Astrocyte of the cerebellum (primary cell): ENCODE measurements at regions of chr1 and their contacts with region 1.

Region 1: GRCh38 chr1:157034137-157034800 is 11.3 kb downstream of the ARHGEF11 start:
- DNase-seq: no peak
- H3K4me3 ChIP-seq: no peak overlapping the region
- CTCF ChIP-seq: no peak

Region 2: DNA sequence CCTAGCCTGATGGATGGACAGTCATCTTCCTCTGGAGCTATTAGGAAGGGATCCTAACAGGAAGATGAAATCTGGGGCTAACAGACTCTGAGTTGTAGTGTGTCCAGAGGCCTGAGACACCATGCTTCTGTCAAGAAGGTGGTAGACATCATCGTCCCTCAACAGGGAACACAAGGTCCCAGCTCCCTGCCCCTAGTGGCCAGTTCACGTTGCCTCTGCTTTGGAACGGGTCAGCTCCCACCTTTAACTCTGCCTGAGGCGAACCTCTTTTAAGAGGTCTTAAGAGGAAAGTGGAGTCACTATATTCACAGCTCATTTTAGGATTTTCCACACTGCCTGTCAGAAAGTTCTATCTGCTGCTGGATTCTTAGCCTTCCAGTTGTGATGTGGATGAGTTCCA is 85.6 kb before region 1 on chr1:
- in situ Hi-C with region 1: loop called (anchors 5 kb)
- DNase-seq: no peak
- H3K4me3 ChIP-seq: no peak overlapping the region
- CTCF ChIP-seq: peak; percentile 27

Region 3: DNA sequence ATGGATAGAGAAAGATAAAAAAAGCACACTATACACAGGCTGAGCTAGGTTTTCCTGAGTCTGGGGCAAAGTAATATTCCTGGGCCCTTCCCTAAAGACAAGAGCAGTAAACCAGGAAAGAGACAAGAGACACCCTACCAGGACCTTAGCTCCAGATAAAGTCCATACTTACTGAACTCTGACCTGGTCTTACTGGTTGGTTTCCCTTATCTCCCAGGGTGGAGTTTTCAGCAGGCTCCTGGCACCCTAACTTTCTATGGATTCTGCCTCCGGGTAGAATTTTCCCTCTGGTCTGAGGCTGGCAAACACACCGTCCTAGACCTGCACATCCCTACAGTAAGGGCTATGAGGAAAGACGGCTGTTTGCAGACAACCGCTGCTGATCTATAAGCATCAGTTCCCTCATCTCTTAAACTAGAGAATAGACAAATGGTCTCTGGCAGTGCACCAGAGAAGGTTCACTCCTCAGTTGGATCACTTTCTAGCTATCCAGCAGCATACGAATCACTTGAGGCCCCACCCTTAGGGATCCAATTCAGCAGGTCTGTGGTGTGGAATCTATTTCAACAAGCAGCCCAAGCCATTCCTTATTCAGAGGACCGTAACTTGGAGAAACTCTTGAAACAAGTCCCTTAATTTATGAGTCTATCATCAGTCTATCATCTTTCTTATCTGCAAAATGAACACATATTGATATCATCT is 40.7 kb before region 1 on chr1:
- in situ Hi-C with region 1: loop called (anchors 5 kb)
- DNase-seq: no peak
- H3K4me3 ChIP-seq: no peak overlapping the region
- CTCF ChIP-seq: no peak

Region 4: GRCh38 chr1:157081707-157082106 is 47.4 kb after region 1 on chr1:
- in situ Hi-C with region 1: loop called (anchors 5 kb)
- DNase-seq: no peak
- H3K4me3 ChIP-seq: no peak overlapping the region
- CTCF ChIP-seq: no peak

Region 5: GRCh38 chr1:158035976-158036583 is 1001.8 kb after region 1 on chr1:
- in situ Hi-C with region 1: no loop called
- DNase-seq: peak; percentile 46
- H3K4me3 ChIP-seq: no peak overlapping the region
- CTCF ChIP-seq: peak; percentile 67